Ovary (tissue), 10 donors: ENCODE measurements at regions of chr4 and their contacts with region 1.

Region 1: GRCh38 chr4:116302990-116303735 is 782.2 kb downstream of the TRAM1L1 start:
- DNase-seq: no peak
- H3K4me3 ChIP-seq: no peak overlapping the region
- H3K27ac ChIP-seq: no peak overlapping the region
- H3K4me1 ChIP-seq: no peaks in the 10 kb centered on the region
- H3K27me3 ChIP-seq: no peaks in the 10 kb centered on the region
- CTCF ChIP-seq: no peak
- EP300 ChIP-seq: no peak
- POLR2A ChIP-seq: no peak

Region 2: GRCh38 chr4:116705451-116705861 is 402.3 kb after region 1 on chr4:
- intact Hi-C with region 1: loop called in 1 of 4 experiments (anchors 5 kb)
- DNase-seq: no peak
- H3K4me3 ChIP-seq: no peak overlapping the region
- H3K27ac ChIP-seq: no peak overlapping the region
- H3K4me1 ChIP-seq: no peaks in the 10 kb centered on the region
- H3K27me3 ChIP-seq: no peaks in the 10 kb centered on the region
- CTCF ChIP-seq: no peak
- EP300 ChIP-seq: no peak
- POLR2A ChIP-seq: no peak